Activated naive CD4-positive, alpha-beta T cell treated with anti-CD3 and anti-CD28 coated beads for 36 hours (primary cell): ENCODE measurements at regions of chr9 and their contacts with region 1.

Region 1: GRCh38 chr9:111728621-111729366 is 65.9 kb downstream of the SHOC1 start:
- DNase-seq: no peak
- H3K4me3 Mint-ChIP-seq: no peak overlapping the region
- H3K27ac Mint-ChIP-seq: no peak overlapping the region
- H3K4me1 Mint-ChIP-seq: peaks cover 11% of the 10 kb centered on the region
- H3K27me3 Mint-ChIP-seq: no peaks in the 10 kb centered on the region

Region 2: DNA sequence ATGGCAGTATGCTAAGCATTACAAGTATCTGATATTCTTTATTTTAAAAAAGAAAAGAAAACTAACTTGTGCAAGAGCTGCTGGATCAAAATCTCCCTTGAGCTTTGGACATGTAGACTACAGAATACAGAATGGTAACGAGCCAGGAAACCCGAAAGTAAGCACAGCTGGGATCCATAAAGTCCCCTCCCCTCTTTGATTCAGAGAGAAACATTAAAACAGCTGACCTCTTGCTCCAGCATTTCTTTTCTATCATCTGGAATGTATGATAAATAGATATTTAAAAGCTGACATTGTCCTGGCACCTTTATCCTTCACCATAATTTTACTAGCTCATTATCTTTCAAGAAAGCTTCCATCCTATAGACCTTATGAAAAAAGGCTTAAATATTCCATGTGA is 662.3 kb before region 1 on chr9:
- CTCF ChIA-PET with region 1: no interaction called
- intact Hi-C with region 1: no loop called
- DNase-seq: no peak
- H3K4me3 Mint-ChIP-seq: no peak overlapping the region
- H3K27ac Mint-ChIP-seq: no peak overlapping the region
- H3K4me1 Mint-ChIP-seq: no peaks in the 10 kb centered on the region
- H3K27me3 Mint-ChIP-seq: peaks cover 4% of the 10 kb centered on the region

Region 3: GRCh38 chr9:111743275-111743674 is 14.5 kb after region 1 on chr9:
- CTCF ChIA-PET with region 1: interaction called, 3 read pairs
- intact Hi-C with region 1: loop called (anchors 1 kb)
- DNase-seq: peak; percentile 66
- H3K4me3 Mint-ChIP-seq: no peak overlapping the region
- H3K27ac Mint-ChIP-seq: peak overlapping the region; percentile 47
- H3K4me1 Mint-ChIP-seq: peaks cover 17% of the 10 kb centered on the region
- H3K27me3 Mint-ChIP-seq: no peaks in the 10 kb centered on the region

Region 4: DNA sequence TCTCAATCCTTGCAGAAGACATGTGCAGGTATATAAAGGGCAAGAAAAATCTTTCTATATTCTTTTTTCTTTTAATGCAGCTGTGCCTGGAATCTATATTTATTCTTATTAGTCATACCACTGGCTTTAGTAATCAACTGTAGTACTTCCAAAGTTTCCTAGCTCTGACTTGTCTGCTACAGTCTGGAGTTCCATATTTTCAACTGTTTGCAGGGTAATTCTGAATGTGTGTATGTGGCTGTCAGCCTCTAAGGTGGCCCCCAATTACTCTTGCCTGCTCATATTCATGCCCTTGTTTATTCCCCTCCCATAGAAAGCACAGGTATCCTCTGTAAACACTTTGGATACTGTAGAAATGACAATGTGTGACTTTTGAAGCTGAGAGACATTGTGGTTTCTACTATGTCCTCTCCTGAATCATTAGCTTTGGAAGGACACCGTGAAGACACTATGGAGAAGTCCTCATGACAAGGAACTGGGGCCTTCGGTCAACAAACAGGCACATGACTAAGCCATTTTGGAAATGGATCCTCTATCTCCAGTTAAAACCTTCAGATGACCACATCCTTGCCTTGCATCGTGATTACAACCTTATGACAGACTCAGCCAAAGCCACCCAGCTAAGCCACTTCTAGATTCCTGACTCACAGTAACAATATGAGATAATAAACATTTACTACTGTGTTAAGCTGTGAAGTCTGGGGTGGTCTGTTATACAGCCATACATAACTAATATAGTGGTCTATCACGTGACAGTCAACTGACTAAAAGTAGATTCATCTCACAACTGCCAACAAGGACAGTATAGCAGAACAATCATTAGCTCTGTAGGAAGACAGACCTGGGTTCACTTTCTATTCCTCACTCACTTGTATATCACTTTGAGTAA is 495.9 kb after region 1 on chr9:
- CTCF ChIA-PET with region 1: no interaction called
- intact Hi-C with region 1: no loop called
- DNase-seq: no peak
- H3K4me3 Mint-ChIP-seq: no peak overlapping the region
- H3K27ac Mint-ChIP-seq: no peak overlapping the region
- H3K4me1 Mint-ChIP-seq: peaks cover 3% of the 10 kb centered on the region
- H3K27me3 Mint-ChIP-seq: no peaks in the 10 kb centered on the region